ENCODE measurements at regions of chr12 and their contacts with region 1.

Region 1: GRCh38 chr12:70557583-70558191 is 79.5 kb downstream of the PTPRB start:
- DNase-seq: peak; percentile 66 to 97 (median 89)

Region 2: GRCh38 chr12:70365648-70366518 is 191.8 kb before region 1 on chr12 and contains the start of gene KCNMB4:
- intact Hi-C with region 1: loop called (anchors 5 kb)
- DNase-seq: peak; percentile 75 to 95 (median 87)

Region 3: GRCh38 chr12:70535896-70536374 is 21.8 kb before region 1 on chr12:
- intact Hi-C with region 1: loop called (anchors 2 kb)
- DNase-seq: peak; percentile 22 to 92 (median 76)

Measured in head of caudate nucleus (tissue), 42 donors.